Activated CD4-positive, alpha-beta T cell treated with anti-CD3 and anti-CD28 coated beads, Interleukin-2, amount 10 ng/mL, durations not matched to agents 7 days and 5 days (primary cell): ENCODE measurements at regions of chr12 and their contacts with region 1.

Region 1: GRCh38 chr12:46459861-46460545 is 87.4 kb upstream of the SLC38A2 start:
- DNase-seq: peak; percentile 44
- H3K4me3 Mint-ChIP-seq: peak overlapping the region; percentile 67
- H3K27ac Mint-ChIP-seq: peak overlapping the region; percentile 93
- H3K4me1 Mint-ChIP-seq: peaks cover 62% of the 10 kb centered on the region
- H3K27me3 Mint-ChIP-seq: no peaks in the 10 kb centered on the region

Region 2: DNA sequence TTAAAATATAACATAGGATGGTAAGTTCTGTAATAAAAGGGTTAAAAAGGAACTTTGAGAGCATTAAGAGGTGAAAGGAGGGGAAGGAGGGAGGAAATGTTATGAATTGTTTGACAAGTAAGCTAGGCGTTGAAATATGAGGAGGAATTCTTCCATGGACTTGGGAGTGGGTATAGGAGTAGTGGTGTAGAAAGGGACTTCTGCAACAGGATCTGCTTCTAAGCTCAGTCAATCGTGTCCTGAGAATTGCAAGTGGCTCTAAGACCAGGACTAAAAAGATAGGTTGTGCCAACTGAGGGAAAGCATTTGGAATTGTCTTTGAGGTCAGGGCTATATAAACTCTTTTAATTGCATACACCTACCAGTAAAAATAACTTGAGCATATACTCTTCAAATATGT is 13.4 kb before region 1 on chr12:
- CTCF ChIA-PET with region 1: no interaction called
- POLR2A ChIA-PET with region 1: no interaction called
- DNase-seq: no peak
- H3K4me3 Mint-ChIP-seq: no peak overlapping the region
- H3K27ac Mint-ChIP-seq: no peak overlapping the region
- H3K4me1 Mint-ChIP-seq: peaks cover 30% of the 10 kb centered on the region
- H3K27me3 Mint-ChIP-seq: no peaks in the 10 kb centered on the region

Region 3: DNA sequence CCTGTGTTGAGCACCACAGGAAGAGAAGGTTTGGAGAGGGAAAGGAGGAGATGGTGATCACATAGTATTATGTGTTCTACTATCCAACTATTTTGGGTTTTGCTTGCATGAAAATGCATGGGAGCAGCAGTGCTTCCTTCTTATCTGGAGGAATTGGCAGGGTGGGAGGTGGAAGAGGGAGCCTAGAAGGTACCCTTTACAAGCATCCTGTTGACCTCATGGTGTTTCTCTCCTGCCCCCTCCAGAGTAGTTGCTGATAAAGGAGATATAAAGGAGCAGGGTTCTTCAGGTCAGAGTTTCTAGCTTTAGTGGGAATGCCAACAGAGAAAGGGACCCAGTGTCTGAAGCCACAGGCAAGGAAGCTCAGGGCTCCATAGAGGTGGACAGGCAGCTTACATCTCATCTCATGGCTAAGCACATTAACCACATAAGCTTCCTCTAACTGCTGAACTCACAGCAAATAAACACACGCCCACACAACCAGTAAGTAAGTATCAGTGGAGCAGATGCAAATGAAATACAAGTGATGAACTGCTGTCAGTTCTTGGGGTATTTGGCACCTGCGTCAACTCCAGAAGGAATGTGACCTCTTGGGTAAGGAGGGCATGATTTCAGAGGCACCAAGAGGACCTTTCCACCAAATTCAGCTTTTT is 86.8 kb after region 1 on chr12:
- CTCF ChIA-PET with region 1: no interaction called
- POLR2A ChIA-PET with region 1: interaction called, 10 read pairs
- DNase-seq: peak; percentile 20
- H3K4me3 Mint-ChIP-seq: no peak overlapping the region
- H3K27ac Mint-ChIP-seq: peak overlapping the region; percentile 77
- H3K4me1 Mint-ChIP-seq: peaks cover 60% of the 10 kb centered on the region
- H3K27me3 Mint-ChIP-seq: no peaks in the 10 kb centered on the region